Left colon (tissue), 2 donors: ENCODE measurements at regions of chr17 and their contacts with region 1.

Region 1: DNA sequence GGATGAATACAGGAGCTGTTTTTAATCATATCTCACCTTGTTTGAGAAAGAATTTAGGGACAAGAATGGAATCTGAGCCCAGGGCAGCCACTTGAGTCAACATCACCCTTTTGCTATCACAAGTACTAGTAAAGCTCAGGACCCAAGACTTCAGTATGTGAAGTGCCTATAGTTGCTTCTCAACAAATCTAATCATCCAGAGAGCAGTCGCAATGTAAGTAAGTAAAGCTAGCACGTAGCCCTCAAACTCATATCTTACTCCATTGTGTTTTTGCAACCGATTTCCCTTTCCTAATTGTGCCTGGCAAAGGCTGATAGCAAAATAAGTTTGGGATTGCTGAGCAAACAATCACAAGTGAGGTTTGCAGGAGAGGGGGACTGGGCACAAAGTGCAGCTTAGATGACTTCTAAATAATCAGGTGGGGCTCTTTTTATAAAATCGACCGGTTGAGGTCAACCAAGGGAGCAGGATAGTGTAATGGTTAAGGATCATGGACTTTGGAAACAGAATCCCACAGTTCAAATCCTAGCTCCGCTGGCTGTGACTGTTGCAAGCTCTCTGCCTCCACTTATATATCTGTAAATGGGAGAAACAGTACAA is 13.0 kb downstream of the TOB1 start:
- DNase-seq: peak in 1 of 2 donors; percentile 19
- ATAC-seq: peak; percentile 24

Region 2: DNA sequence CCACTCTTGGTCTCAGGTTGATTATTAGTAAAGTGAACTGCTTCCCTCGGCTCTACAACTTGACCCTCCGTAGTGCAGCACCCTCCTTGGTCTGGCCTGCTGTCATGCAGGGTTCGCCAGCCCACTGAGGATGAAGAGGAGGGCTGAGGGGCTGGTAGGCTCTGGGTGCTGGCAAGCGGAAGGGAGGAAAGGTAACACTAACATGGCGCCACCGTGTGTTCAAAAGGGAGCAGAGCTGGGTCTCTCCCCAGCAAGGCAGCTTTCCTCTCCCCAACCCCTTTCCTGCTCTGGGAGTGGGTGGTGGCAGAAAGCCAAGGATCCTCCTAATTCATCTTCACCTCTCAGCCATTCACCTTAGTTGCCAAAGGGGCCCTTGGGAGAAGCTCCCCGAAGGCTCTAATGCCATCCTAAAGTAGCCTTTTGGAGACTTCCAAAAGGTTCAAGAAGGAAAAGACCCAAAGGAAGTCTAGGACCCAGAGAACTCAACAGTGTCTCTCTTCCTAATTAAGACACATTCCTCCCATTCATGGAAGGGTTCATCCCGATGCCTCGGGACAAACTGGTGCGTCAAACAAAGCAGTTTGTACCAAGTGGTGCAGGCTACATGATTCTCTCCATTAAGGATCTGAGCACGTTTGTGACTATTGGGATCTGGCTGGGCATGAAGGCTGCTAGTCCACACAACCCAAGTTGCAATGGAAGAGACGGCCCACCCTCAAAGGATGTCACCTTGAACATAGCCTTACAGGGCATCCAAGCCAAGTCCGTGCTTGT is 103.8 kb after region 1 on chr17:
- intact Hi-C with region 1: loop called (anchors 5 kb)
- DNase-seq: peak; percentile 49 to 76
- ATAC-seq: peak; percentile 54